CD14-positive monocyte (primary cell): ENCODE measurements at regions of chr16 and their contacts with region 1.

Region 1: DNA sequence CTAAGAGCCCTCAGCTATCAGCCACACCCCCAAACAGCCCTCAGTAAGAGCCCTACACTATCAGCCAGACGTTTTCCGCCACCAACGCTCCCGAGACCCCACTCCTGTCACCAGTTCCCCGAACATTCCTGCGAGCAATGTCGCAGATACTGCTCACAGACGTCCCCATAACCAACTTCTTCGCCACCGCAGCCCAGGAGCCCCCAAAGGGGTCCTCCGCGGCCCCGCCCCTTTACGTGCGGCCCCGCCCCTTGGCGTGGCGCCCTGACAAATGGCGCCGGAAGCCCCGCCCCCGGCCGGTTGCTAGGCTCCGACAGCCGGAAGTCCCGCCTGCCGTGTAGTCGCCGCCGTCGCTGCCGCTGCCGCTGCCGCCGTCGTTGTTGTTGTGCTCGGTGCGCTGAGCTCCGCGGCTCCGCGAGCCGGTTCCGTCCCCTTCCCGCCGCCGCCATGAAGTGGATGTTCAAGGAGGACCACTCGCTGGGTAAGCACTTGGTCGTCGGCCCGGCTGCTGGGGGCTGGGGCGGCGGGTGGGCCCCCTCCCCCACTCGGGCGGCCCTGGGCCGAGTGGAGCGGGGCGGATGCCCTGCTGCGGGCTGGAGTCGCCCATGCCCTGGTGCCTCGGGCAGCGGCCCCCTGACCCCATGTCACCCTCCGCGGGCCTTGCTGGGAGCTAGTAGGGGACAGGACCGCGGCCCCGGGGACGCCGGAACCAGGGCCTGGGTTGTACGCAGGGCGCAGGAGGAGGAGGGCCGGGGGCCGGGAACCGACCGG is at the start of gene GABARAPL2:
- DNase-seq: peak; percentile 84 to 86 (median 85)
- H3K4me3 ChIP-seq: peak within 1 kb of the TSS; percentile 76 to 92 (median 87)
- H3K4me3 Mint-ChIP-seq: peak within 1 kb of the TSS; percentile 98 to 100
- H3K27ac ChIP-seq: peak within 1 kb of the TSS; percentile 79 to 93
- H3K27ac Mint-ChIP-seq: peak within 1 kb of the TSS; percentile 95 to 100 (median 99)
- H3K4me1 ChIP-seq: peaks cover 36 to 46% of the 10 kb centered on the region in 2 donors
- H3K4me1 Mint-ChIP-seq: peaks cover 48% of the 10 kb centered on the region
- H3K27me3 ChIP-seq: peaks cover 3 to 8% of the 10 kb centered on the region in 2 donors
- H3K27me3 Mint-ChIP-seq: peaks cover 13 to 14% (median 13%) of the 10 kb centered on the region in 3 donors
- CTCF ChIP-seq: no peak
- polyA plus RNA-seq, gene GABARAPL2: 84.3 to 302 (median 280) TPM

Region 2: GRCh38 chr16:75432828-75433731 is 133.1 kb before region 1 on chr16 and contains the start of gene CFDP1:
- intact Hi-C with region 1: loop called (anchors 5 kb)
- DNase-seq: peak; percentile 93 to 95 (median 94)
- H3K4me3 ChIP-seq: peak within 1 kb of the TSS; percentile 74 to 91 (median 83)
- H3K4me3 Mint-ChIP-seq: peak within 1 kb of the TSS; percentile 76 to 99
- H3K27ac ChIP-seq: peak within 1 kb of the TSS; percentile 96 to 99
- H3K27ac Mint-ChIP-seq: peak within 1 kb of the TSS; percentile 95 to 100 (median 99)
- H3K4me1 ChIP-seq: peaks cover 16 to 26% of the 10 kb centered on the region in 2 donors
- H3K4me1 Mint-ChIP-seq: peaks cover 30% of the 10 kb centered on the region
- H3K27me3 ChIP-seq: no peaks in the 10 kb centered on the region
- H3K27me3 Mint-ChIP-seq: peaks cover 0 to 10% (median 3%) of the 10 kb centered on the region in 3 donors
- CTCF ChIP-seq: no peak
- polyA plus RNA-seq, gene CFDP1: 12.9 to 23.2 (median 19.0) TPM

Region 3: DNA sequence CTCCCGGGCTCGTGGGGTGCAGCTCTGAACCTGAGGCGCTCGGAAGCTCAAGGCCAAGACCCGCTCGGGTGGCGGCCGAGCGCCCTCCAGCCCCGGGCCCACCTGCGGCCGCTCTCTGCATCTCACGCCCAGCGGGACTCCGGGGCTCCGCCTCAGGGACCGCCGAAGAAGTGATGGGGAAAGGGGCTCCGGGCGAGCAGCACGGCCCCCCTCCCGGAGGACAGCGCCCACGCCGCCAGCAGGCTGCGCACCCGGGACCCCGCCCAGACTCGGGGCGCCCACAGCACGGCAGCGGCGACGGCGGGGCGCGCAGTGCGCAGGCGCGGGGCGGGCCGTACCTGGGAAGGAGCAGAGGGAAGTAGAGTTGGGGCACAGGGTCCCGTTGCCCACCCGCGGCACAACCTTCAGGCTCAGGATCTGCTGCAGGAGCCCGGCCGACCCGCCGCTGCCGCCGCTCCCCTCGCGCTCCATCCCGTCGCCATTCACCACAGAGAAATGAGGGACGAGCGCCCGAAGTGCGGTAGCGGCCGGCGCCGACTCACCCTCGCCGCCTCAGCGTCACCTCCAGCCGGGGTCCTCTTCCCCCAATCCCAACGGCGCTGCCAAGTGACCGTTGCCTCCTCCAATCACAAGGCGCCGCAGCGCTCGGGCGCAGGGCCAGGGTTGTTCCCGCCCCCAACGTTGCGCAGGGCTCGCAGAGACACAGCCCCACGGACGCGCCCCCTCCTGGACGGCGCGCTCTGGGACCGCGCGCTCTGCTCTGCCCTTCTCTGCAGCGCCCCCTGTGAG is 101.9 kb before region 1 on chr16 and contains the start of gene TMEM170A:
- intact Hi-C with region 1: loop called in 1 of 2 experiments (anchors 5 kb)
- DNase-seq: peak; percentile 99 to 100 (median 99)
- H3K4me3 ChIP-seq: peak within 1 kb of the TSS; percentile 65 to 87 (median 78)
- H3K4me3 Mint-ChIP-seq: peak within 1 kb of the TSS; percentile 95 to 96
- H3K27ac ChIP-seq: peak within 1 kb of the TSS; percentile 88 to 94
- H3K27ac Mint-ChIP-seq: peak within 1 kb of the TSS; percentile 89 to 97 (median 96)
- H3K4me1 ChIP-seq: peaks cover 25 to 34% of the 10 kb centered on the region in 2 donors
- H3K4me1 Mint-ChIP-seq: peaks cover 29% of the 10 kb centered on the region
- H3K27me3 ChIP-seq: no peaks in the 10 kb centered on the region
- H3K27me3 Mint-ChIP-seq: peaks cover 0 to 3% (median 2%) of the 10 kb centered on the region in 3 donors
- CTCF ChIP-seq: peak; percentile 100
- polyA plus RNA-seq, gene TMEM170A: 17.9 to 31.6 (median 25.4) TPM

Region 4: DNA sequence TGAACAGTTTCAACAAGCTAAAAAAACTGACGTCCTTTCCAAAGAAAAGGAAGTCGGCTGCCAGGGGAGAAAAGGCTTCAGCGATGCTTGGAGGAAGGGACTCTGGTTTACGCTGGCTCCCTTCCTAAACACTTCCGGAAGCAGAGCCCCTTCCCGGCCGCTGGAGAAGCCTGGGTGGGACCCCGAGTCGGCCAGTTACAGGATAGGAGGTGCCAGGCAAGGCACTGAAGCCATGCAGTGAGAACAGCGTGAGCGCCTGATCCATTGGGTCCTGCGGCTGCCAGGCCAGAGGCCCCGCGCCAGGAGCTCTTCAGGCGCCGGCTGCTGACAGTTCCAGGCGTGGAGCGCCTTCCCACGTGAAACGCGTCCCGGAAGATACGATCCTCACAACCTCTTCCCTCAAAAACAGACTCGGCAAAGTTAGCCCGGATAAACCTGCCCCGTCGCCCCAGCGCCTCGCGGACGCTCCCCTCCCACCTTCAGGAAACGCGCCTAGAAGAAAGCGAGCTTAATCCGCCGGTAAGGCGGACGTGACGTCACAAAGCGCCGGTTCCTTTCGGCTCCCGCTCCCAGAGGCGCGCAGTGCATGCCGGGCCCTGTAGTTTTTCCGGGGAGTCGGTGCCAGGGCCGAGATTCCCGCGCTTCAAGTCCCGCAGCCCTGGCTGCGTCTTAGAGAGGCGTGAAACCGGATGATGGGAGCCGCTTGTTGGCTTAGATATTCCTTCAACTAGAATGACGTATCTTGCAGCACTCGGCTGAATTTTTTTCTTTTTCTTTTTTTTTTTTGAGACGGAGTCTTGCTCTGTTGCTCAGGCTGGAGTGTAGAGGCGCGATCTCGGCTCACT is 56.8 kb after region 1 on chr16 and contains the start of gene ADAT1:
- intact Hi-C with region 1: loop called (anchors 5 kb)
- DNase-seq: peak; percentile 97 to 99 (median 97)
- H3K4me3 ChIP-seq: peak within 1 kb of the TSS; percentile 70 to 95 (median 93)
- H3K4me3 Mint-ChIP-seq: peak within 1 kb of the TSS; percentile 98 to 99
- H3K27ac ChIP-seq: peak within 1 kb of the TSS; percentile 92 to 93
- H3K27ac Mint-ChIP-seq: peak within 1 kb of the TSS; percentile 95 to 99 (median 97)
- H3K4me1 ChIP-seq: peaks cover 12 to 24% of the 10 kb centered on the region in 2 donors
- H3K4me1 Mint-ChIP-seq: peaks cover 29% of the 10 kb centered on the region
- H3K27me3 ChIP-seq: no peaks in the 10 kb centered on the region
- H3K27me3 Mint-ChIP-seq: no peaks in the 10 kb centered on the region
- CTCF ChIP-seq: no peak
- polyA plus RNA-seq, gene ADAT1: 16.8 to 18.9 (median 17.8) TPM

Region 5: DNA sequence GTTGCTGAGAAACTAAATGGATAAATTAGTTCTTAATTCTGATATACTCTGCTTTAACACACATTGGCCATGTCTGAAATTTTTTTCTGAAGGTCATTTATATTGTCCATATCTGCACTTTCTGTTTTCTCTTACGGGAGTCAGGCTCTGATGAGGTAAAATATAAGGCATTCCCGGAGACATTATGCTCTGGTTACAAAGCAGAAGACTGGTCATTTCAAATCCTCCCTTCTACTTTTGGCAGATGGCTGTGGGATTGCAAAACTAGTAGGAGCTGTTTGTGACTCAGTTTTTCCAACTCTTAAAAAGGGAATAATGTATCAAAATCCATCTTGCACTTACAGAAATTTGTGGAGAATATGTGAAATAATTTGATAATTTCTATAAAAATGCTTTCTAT is 252.3 kb after region 1 on chr16:
- intact Hi-C with region 1: no loop called
- DNase-seq: no peak
- H3K4me3 ChIP-seq: no peak overlapping the region
- H3K4me3 Mint-ChIP-seq: no peak overlapping the region
- H3K27ac ChIP-seq: no peak overlapping the region
- H3K27ac Mint-ChIP-seq: no peak overlapping the region
- H3K4me1 ChIP-seq: no peaks in the 10 kb centered on the region
- H3K4me1 Mint-ChIP-seq: no peaks in the 10 kb centered on the region
- H3K27me3 ChIP-seq: no peaks in the 10 kb centered on the region
- H3K27me3 Mint-ChIP-seq: peaks cover 1 to 4% (median 2%) of the 10 kb centered on the region in 3 donors
- CTCF ChIP-seq: no peak

Region 6: DNA sequence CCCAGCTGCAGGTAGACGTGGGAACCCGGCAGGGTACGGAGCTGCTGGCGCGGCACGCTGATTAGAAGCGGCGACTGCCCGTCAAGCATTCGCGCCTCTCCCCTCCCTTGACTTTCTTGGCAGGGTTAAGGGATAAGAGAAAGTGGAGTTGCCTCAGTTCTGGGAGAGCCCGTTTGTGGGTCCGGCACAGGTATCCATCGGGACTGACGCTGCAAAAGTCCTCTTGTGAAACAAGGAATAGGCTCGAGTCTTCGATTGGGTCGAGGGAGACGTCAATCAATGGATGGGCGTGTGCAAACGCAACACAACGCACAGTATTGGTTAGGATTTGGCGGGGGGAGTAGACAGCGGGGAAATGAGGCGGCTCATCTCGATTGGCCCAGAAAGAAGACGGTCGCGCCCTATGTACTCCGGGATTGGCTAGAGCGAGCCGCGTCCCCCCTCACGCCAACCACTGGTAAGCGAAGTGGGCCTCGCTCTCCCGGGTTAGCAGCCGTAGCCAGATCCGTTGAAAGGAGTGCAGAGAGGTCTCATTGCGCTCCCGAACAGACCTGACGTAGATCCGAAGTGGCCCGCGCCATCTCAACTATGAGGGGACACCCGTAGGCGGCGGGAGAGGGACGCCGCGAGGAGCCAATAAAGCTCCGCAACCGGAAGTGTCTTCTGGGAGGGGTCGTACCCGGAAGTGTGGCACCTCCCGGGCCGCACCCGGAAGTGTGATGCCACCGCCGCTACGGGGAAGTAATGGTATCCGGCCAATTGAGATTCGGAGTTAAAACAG is 1624.4 kb after region 1 on chr16 and contains the start of gene MON1B:
- intact Hi-C with region 1: loop called in 1 of 2 experiments (anchors 5 kb)
- DNase-seq: peak; percentile 97 to 98 (median 98)
- H3K4me3 ChIP-seq: peak within 1 kb of the TSS; percentile 95 to 99 (median 98)
- H3K4me3 Mint-ChIP-seq: peak within 1 kb of the TSS; percentile 91 to 97
- H3K27ac ChIP-seq: peak within 1 kb of the TSS; percentile 98 to 100
- H3K27ac Mint-ChIP-seq: peak within 1 kb of the TSS; percentile 99 to 100 (median 100)
- H3K4me1 ChIP-seq: peaks cover 21 to 34% of the 10 kb centered on the region in 2 donors
- H3K4me1 Mint-ChIP-seq: peaks cover 29% of the 10 kb centered on the region
- H3K27me3 ChIP-seq: peaks cover 0 to 2% of the 10 kb centered on the region in 2 donors
- H3K27me3 Mint-ChIP-seq: peaks cover 1 to 5% (median 2%) of the 10 kb centered on the region in 3 donors
- CTCF ChIP-seq: no peak
- polyA plus RNA-seq, gene MON1B: 26.4 to 35.7 (median 35.6) TPM